ENCODE measurements at regions of chr7 and their contacts with region 1.

Region 1: DNA sequence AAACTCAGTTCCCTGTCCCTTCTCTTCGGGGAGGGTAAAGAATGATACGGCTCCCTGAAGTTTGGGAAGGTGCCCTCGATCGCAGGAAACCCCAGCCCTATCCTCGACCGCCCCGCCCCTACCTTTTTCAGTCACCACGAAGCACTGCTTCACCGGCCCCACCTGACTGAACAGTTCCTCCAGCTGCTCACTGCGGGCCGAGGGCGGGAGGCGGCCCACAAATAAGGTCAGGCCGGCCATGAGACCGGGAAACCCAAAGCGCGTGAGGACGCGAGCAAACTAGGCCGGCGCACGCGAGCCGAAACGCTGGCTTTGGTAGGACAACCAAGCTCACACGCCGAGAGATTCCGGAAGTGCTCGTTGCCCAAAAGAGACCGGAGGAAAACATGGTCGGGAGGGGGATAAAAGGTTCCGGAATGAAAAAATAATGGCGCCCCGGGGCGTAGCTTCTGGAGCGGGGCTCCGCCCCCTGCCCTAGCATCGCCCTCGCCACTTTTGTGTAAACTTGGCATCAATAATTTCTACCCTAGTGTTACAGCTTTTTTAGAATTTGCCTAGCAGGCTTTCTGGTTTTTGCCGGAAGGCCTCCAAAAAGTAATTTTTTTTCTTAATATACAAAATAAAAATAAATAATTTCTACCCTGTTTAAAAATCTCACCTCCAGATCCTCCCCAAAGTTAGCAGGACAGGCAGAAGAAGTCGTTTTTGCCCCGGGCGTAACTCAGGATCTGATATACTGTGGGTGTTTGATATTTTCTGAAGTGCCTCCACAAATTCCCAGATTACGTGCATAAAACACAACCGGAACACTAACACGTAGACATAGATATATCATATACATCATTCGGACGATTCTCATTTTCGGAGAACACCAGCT is at the start of gene RBM28:
- DNase-seq: peak; percentile 94
- H3K4me3 ChIP-seq: peak within 1 kb of the TSS; percentile 60 to 80
- H3K27ac ChIP-seq: peak within 1 kb of the TSS; percentile 73 to 86
- H3K4me1 ChIP-seq: peaks cover 0 to 28% of the 10 kb centered on the region in 2 experiments; a peak in 2 of 4 replicates
- H3K27me3 ChIP-seq: no peaks in the 10 kb centered on the region
- CTCF ChIP-seq: no peak
- EP300 ChIP-seq: peak in 1 of 2 experiments; percentile 70; a peak in 1 of 4 replicates
- RAD21 ChIP-seq: peak; percentile 31; the same call in 1 of the 2 replicates
- polyA plus RNA-seq, gene RBM28: 29.1 and 33.0 TPM in 2 replicates

Region 2: DNA sequence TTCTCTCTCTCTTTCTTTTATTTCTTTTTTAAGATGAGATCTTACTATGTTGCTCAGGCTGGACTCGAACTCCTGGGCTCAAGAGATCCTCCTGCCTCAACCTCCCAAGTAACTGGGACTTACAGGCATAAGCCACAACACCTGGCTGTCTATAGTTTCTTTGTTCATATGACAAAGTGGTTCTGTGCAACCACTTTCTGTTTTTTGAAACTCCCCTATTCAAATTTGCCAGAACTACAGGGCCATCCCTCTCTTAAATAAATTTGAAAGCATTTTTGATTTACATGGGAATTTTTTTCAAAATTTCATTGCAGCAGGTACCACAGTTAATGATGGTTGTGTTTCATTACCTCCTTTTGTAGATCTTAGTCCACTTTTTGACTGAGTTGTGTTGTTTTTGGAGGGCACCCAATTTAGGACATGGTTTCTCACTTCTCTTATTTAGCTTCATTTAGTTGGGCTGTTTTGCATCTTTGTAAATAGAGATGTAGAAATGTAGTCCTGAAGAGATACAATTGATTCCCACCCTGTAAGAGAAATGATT is 431.8 kb before region 1 on chr7:
- CTCF ChIA-PET with region 1: no interaction called
- POLR2A ChIA-PET with region 1: no interaction called
- DNase-seq: no peak
- H3K4me3 ChIP-seq: no peak overlapping the region
- H3K27ac ChIP-seq: no peak overlapping the region
- H3K4me1 ChIP-seq: no peaks in the 10 kb centered on the region
- H3K27me3 ChIP-seq: no peaks in the 10 kb centered on the region
- CTCF ChIP-seq: no peak
- EP300 ChIP-seq: no peak
- RAD21 ChIP-seq: no peak

Region 3: DNA sequence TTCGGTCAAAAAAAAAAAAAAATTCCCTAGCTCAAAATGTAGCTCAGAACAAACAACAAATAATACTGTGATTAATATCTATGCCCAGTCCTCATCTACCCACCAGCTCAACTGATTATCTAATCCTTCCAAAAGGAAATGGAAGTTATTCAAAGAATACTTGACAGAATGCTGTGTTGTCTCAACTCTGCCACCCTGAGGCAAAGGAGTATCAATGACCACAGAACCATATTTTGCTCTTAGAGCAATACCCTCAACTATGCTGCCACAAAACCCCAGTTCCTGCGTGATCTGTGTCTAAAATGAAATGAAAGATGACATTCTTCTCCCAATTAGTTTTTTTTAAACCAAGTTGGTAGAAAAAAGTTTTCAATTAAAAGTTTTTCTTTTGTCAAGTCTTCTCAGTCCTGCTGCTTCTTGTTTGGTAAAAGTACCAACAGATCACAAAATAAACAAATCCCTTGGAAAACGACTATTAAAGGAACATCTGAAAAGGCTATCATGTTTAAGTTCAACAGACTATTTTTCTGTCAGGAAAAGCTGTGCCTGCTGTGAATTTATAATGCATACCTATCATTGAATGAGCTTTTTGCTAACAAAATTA is 21.6 kb before region 1 on chr7:
- CTCF ChIA-PET with region 1: interaction called, 29 read pairs
- POLR2A ChIA-PET with region 1: interaction called, 3 read pairs
- DNase-seq: peak; percentile 47
- H3K4me3 ChIP-seq: no peak overlapping the region
- H3K27ac ChIP-seq: peak overlapping the region in 1 of 2 experiments; percentile 16; a peak in 1 of 4 replicates
- H3K4me1 ChIP-seq: peaks cover 0 to 6% of the 10 kb centered on the region in 2 experiments; a peak in 2 of 4 replicates
- H3K27me3 ChIP-seq: no peaks in the 10 kb centered on the region
- CTCF ChIP-seq: peak; percentile 68
- EP300 ChIP-seq: no peak
- RAD21 ChIP-seq: peak; percentile 70

Region 4: DNA sequence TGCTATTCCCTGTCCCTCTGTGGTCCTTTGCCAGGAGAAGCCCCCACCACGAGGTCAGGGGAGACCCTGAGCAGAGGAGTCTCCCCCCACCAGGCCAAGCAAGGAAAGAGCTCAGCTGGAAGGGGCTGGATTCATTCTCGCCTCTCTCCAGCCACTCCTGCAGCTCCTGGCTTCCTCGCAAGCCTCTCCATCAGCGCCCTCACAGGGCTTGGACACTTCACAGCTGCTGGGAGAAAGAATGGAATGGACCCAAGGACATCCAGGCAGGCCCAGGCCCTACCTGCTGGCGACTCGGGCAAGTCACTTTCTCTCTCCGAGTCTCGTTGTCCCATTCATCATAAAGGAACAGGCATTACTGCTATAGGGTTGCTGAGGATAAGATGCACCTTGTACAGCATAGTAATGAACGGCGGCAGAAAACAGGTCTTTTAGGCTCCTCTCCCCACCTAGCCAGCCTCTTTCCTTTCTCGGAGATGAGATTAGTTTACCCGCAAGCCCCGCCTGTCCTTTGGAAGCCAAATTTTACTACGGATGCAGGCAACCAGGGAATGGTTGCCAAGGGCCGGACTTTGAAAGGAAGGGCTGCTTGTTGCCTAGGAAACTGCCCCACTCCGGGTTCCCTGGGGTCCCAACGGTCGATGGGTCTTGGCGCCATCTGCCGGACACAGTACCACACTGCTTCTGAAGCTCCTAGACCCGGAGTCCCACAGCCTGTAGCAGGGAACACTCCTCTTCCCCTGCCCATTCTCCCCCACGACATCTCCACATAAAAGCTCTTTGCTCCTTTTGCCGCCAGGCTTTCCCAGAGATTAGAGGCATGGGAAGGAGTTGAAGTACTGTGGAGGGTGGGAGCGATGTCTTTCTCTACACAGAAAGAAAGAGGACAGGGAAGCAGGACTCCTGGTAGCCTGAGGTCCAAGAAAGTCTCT is 43.7 kb after region 1 on chr7:
- CTCF ChIA-PET with region 1: interaction called, 1,786 read pairs
- POLR2A ChIA-PET with region 1: interaction called, 107 read pairs
- DNase-seq: peak; percentile 99
- H3K4me3 ChIP-seq: peak overlapping the region in 1 of 2 experiments; percentile 16; a peak in 2 of 4 replicates
- H3K27ac ChIP-seq: peak overlapping the region in 1 of 2 experiments; percentile 94; a peak in 2 of 4 replicates
- H3K4me1 ChIP-seq: peaks cover 0 to 41% of the 10 kb centered on the region in 2 experiments; a peak in 1 of 4 replicates
- H3K27me3 ChIP-seq: no peaks in the 10 kb centered on the region
- CTCF ChIP-seq: peak; percentile 98
- EP300 ChIP-seq: peak in 1 of 2 experiments; percentile 57; a peak in 2 of 4 replicates
- RAD21 ChIP-seq: peak; percentile 99

Region 5: DNA sequence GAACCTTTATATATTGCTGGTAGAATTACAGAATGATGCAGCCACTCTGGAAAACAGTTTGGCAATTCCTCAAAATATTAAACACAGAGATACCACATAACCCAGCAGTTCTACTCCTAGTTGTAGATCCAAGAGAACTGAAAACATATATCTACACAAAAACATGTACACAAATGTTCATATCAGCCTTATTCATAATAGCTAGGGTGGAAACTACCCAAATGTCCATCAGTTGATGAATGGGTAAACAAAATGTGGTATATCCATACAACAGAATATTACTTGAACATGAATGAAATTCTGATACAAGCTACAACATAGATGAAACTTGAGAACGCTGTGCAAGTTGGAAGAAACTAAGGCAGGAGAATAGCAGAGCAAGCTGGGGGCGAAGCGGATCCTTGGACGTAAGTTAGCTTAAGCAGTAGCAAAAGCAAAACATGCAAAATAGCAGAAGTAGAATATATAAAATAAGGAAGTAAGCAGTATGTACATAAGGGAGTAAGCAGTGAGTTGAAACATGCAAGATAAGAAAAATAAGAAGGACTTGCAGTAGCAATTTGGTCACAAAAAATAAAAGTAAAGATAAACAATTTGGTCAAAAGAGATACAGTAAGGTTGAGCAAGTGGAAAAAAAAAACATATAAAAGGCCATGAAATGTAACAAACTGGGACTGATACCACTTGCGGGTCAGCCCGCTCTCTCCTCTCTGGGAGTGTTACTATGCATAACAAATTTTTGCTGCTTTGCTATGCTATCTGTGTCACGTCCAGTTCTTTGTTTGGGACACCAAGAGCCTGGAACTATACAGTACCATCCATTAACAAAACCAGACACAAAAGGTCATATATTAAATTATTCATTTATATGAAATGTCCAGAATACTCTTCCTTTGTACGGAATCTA is 93.9 kb after region 1 on chr7:
- CTCF ChIA-PET with region 1: interaction called, 387 read pairs
- POLR2A ChIA-PET with region 1: interaction called, 3 read pairs
- DNase-seq: no peak
- H3K4me3 ChIP-seq: no peak overlapping the region
- H3K27ac ChIP-seq: no peak overlapping the region
- H3K4me1 ChIP-seq: 0 out of 4 replicates have a peak, but pooled peaks cover 0 to 7% of the 10 kb centered on the region in 2 experiments
- H3K27me3 ChIP-seq: no peaks in the 10 kb centered on the region
- CTCF ChIP-seq: no peak
- EP300 ChIP-seq: no peak
- RAD21 ChIP-seq: no peak

Region 6: GRCh38 chr7:128450409-128450808 is 106.6 kb after region 1 on chr7:
- CTCF ChIA-PET with region 1: interaction called, 42 read pairs
- POLR2A ChIA-PET with region 1: interaction called, 7 read pairs
- DNase-seq: no peak
- H3K4me3 ChIP-seq: no peak overlapping the region
- H3K27ac ChIP-seq: no peak overlapping the region
- H3K4me1 ChIP-seq: peaks cover 6 to 28% of the 10 kb centered on the region in 2 experiments; a peak in 2 of 4 replicates
- H3K27me3 ChIP-seq: no peaks in the 10 kb centered on the region
- CTCF ChIP-seq: no peak
- EP300 ChIP-seq: no peak
- RAD21 ChIP-seq: no peak